ENCODE measurements at regions of chr12 and their contacts with region 1.

Region 1: DNA sequence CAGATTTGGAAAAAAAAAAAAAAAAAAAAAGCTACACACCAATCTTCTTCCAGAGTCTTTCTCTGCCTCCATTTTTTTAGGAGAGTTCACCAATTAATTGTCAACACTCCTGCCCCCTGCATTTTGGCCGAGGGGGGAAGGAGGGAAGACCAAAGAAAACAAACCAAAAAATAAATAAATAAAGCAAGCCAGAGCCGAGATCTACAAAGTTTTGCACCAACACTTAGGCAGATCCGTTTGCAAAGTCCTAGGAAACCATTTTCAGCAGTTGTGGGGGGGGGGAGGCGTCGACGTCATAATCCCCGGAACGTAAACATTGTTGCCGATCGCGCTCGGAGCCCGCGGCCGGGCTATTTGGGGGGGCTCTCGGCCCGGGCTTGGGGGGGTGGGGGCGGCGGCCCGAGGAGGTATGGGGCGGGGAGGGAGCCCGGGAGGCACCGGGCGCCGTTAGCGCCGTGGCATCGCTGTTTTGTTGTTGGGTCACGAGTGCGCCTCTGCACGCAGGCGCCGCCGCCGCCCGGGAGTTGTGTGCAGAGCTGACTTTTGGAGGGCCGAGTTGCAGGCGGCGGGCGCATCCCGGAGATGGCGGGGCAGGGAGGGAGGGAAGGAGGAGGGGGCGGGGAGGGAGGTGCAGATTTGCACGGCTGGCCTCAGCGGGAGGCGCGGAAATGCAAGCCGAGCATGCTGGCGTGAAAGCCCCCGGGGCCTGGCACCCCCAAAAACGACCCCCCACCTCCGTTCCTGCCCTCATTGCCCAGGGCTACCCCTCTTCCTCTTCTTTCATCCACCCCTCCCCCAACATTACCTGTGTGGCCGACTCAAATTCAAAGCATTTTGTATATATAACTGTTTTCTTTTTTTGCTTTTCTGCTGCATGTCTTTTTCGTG is 598 bp downstream of the KDM2B start:
- DNase-seq: peak; percentile 87

Region 2: DNA sequence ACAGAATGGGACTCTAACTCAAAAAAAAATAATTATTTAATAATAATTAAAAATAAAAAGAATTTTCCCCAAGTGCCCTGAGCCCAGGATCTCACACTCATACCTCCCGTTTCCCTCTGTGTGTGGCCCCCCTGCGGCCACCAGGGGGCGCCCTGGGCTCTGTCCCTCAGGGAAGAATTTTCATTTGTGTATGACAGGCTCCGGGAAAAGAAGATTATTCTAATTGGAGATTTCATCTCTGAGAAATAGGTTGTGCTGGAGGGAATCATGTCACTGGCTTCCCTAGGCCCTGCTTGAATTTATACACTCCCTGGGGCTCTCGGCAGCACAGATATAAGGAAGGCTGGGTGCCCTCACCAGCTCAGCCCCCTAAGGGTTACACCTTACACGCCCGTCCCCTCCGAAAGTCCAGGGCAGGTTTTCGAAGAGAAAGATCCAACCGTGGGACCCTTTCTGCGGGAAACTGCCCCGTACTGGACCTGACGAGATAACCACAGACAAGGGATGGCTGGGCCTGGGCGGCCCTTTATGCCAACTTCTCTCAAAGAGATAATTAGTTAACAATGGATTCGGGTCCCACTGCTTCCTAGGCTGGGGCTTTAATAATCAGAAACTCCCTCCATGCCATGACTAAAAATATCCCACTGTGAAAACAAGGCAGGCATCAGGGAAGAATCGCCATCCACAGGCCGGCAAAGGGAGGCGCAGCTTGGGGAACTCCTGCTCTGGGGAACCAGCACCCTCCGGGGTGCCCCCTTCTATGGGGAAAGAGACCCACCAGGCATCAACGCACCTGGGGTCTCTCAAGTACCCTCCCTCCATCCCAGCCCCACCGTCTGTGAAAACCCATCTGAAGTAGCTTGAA is 80.1 kb before region 1 on chr12:
- intact Hi-C with region 1: no loop called
- DNase-seq: peak; percentile 90

Region 3: GRCh38 chr12:121590476-121591143 is 10.4 kb after region 1 on chr12:
- intact Hi-C with region 1: loop called (anchors 1 kb)
- DNase-seq: no peak

Region 4: GRCh38 chr12:121626087-121626852 is 46.0 kb after region 1 on chr12 and contains the start of gene ORAI1:
- intact Hi-C with region 1: loop called (anchors 2 kb)
- DNase-seq: peak; percentile 99
- total RNA-seq, gene ORAI1: 8.0 TPM

Region 5: DNA sequence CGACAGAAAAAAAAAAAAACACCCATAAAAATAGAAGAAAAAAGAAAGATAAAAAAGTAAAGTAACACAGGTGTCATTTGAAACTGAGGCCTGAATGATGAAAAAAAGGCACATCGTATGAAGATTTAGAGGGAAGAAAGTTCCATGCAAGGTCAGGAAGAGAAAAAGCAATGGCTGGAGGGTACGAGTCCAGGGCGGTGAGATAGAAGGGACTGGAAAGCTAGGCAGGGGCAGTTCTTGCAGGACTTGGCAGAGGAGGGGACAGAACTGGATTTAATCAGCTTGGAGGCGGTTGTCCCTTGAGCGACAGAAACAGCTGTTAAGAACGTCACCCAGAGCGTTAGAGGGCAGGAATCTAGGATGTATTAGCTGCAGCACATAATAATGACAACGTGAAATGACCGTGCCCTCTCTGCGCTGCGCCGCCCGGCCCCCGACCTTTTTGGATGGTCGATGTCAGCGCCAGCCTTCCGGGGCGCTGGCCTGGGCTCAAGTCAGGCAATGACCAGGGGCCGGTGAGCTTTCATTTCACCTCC is 131.8 kb after region 1 on chr12:
- intact Hi-C with region 1: no loop called
- DNase-seq: no peak

Measured in cardiac septum (tissue), 1 donor.